Endothelial cell of umbilical vein (primary cell): ENCODE measurements at regions of chr5 and their contacts with region 1.

Region 1: DNA sequence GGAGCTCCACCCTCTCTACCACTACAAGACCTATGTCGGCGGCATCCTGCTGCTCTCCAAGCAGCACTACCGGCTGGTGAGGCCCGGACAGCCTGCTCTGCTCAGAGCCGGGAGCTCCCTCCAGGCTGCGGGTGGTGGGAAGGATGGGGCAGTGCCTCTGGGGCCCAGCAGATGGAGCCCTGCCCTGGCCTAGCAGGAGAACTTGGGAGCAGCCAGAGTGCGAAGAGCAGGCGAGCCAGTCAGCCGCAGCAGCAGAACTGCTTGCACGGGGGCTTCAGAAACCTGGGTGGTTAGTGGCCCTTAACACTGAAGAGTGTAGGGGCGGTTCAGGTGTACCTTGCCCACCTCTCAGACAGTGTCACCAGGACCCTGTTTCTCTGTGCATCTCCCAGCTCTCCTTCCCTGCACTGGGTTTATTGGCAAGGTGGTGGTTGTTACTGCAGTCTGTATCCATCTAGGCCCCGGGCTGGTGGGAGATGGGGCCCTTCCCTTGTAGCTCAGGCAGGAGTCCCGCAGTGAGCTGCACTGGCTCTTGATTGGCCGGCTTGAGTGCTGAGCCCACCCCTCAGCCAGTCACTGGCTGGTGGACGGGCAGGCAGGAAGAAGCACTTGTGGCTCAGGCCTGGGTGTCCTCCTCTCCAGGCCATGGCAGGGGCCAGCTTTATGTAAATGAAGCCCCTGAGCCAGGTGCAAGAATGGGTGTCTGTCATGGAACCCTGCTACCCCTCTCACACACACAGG is 7.7 kb downstream of the B4GALT7 start:
- DNase-seq: peak; percentile 77
- H3K4me3 ChIP-seq: no peak overlapping the region
- H3K27ac ChIP-seq: no peak overlapping the region
- H3K4me1 ChIP-seq: no peaks in the 10 kb centered on the region
- H3K27me3 ChIP-seq: no peaks in the 10 kb centered on the region
- CTCF ChIP-seq: peak; percentile 86 to 95
- POLR2A ChIP-seq: no peak

Region 2: GRCh38 chr5:177592010-177592834 is 15.4 kb before region 1 on chr5 and contains the start of gene TMED9:
- CTCF ChIA-PET with region 1: interaction called, 15 read pairs
- POLR2A ChIA-PET with region 1: no interaction called
- dilution Hi-C with region 1: no loop called
- intact Hi-C with region 1: no loop called
- DNase-seq: peak; percentile 92
- H3K4me3 ChIP-seq: peak within 1 kb of the TSS; percentile 72 to 92 (median 90)
- H3K27ac ChIP-seq: peak within 1 kb of the TSS; percentile 64
- H3K4me1 ChIP-seq: peaks cover 9% of the 10 kb centered on the region
- H3K27me3 ChIP-seq: peaks cover 13 to 33% of the 10 kb centered on the region in 2 experiments
- CTCF ChIP-seq: no peak
- POLR2A ChIP-seq: peak; percentile 96
- total RNA-seq, gene TMED9: 286 and 291 TPM in 2 replicates

Region 3: DNA sequence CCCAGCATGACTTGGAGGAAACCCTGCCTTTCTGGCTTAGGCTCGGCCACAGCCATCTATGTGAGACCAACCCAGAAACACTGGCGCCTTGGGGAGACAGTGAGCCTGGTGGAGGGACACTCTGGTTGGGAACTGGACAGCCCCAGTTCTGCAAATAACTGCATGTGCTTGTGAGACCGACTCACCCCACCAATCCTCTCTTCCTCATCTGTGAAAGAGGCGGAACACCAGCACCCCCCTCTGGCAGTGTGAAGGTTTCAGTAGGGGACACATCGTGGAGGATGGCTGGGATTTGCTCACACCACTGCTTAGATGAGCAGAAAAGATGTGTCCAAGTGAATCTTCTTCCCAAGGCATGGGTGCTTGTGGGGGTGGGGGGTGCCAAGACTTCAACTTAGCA is 462.3 kb after region 1 on chr5:
- CTCF ChIA-PET with region 1: interaction called, 5 read pairs
- POLR2A ChIA-PET with region 1: no interaction called
- dilution Hi-C with region 1: no loop called
- intact Hi-C with region 1: loop called (anchors 2 kb)
- DNase-seq: peak; percentile 41
- H3K4me3 ChIP-seq: no peak overlapping the region
- H3K27ac ChIP-seq: no peak overlapping the region
- H3K4me1 ChIP-seq: no peaks in the 10 kb centered on the region
- H3K27me3 ChIP-seq: peaks cover 0 to 2% of the 10 kb centered on the region in 2 experiments
- CTCF ChIP-seq: peak; percentile 40 to 51
- POLR2A ChIP-seq: no peak

Region 4: GRCh38 chr5:178163772-178164735 is 556.4 kb after region 1 on chr5:
- CTCF ChIA-PET with region 1: interaction called, 3 read pairs
- POLR2A ChIA-PET with region 1: no interaction called
- dilution Hi-C with region 1: no loop called
- intact Hi-C with region 1: loop called (anchors 1 kb)
- DNase-seq: peak; percentile 78
- H3K4me3 ChIP-seq: no peak overlapping the region
- H3K27ac ChIP-seq: no peak overlapping the region
- H3K4me1 ChIP-seq: no peaks in the 10 kb centered on the region
- H3K27me3 ChIP-seq: peaks cover 4% of the 10 kb centered on the region in 2 experiments
- CTCF ChIP-seq: peak; percentile 95 to 99
- POLR2A ChIP-seq: no peak